MCF 10A (cell line): ENCODE measurements at regions of chr14 and their contacts with region 1.

Region 1: DNA sequence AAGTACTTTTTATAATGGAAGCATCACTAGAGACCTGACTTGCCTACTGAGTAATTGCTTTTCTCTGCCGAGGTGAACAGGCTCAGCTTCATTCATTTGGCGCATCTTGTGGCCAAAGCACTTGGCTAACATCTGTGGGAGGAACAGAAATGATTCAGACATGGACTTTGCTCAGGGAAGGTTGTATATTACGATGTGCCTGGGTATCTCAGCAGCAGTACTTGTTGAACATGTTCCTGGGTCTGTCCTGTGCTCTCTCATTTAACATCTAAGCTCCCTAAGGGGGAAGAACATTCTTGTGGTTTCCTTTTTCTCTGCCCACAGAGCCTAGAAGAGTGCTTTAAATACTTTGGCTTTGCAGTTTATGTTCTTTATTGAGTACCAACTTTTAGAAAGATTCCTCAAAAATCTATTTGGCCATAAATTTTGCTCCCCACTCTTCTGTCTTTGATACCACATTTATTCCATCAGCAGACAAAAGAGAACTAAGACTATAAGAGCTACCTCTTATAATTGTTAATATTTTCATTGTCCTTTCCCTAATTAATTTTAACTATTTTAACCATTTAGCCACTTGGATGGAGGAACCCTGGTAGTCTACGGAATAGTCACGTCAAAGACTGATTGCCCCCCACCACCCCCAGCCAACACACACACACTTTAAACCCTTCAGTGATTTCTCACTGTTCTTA is 101.2 kb upstream of the EGLN3 start:
- DNase-seq: peak; percentile 65
- H3K4me3 Mint-ChIP-seq: no peak overlapping the region
- H3K27ac Mint-ChIP-seq: no peak overlapping the region
- H3K4me1 Mint-ChIP-seq: peaks cover 26% of the 10 kb centered on the region
- H3K27me3 Mint-ChIP-seq: no peaks in the 10 kb centered on the region
- CTCF ChIP-seq: no peak

Region 2: GRCh38 chr14:33862261-33862802 is 189.8 kb before region 1 on chr14:
- CTCF ChIA-PET with region 1: no interaction called
- POLR2A ChIA-PET with region 1: no interaction called
- intact Hi-C with region 1: no loop called
- DNase-seq: no peak
- H3K4me3 Mint-ChIP-seq: no peak overlapping the region
- H3K27ac Mint-ChIP-seq: no peak overlapping the region
- H3K4me1 Mint-ChIP-seq: no peaks in the 10 kb centered on the region
- H3K27me3 Mint-ChIP-seq: no peaks in the 10 kb centered on the region
- CTCF ChIP-seq: no peak

Region 3: GRCh38 chr14:34035177-34035933 is 16.8 kb before region 1 on chr14:
- CTCF ChIA-PET with region 1: interaction called, 4 read pairs
- POLR2A ChIA-PET with region 1: interaction called, 10 read pairs
- intact Hi-C with region 1: no loop called
- DNase-seq: peak; percentile 80
- H3K4me3 Mint-ChIP-seq: no peak overlapping the region
- H3K27ac Mint-ChIP-seq: peak overlapping the region; percentile 94
- H3K4me1 Mint-ChIP-seq: peaks cover 34% of the 10 kb centered on the region
- H3K27me3 Mint-ChIP-seq: no peaks in the 10 kb centered on the region
- CTCF ChIP-seq: no peak